B cell (primary cell): ENCODE measurements at regions of chr12 and their contacts with region 1.

Region 1: DNA sequence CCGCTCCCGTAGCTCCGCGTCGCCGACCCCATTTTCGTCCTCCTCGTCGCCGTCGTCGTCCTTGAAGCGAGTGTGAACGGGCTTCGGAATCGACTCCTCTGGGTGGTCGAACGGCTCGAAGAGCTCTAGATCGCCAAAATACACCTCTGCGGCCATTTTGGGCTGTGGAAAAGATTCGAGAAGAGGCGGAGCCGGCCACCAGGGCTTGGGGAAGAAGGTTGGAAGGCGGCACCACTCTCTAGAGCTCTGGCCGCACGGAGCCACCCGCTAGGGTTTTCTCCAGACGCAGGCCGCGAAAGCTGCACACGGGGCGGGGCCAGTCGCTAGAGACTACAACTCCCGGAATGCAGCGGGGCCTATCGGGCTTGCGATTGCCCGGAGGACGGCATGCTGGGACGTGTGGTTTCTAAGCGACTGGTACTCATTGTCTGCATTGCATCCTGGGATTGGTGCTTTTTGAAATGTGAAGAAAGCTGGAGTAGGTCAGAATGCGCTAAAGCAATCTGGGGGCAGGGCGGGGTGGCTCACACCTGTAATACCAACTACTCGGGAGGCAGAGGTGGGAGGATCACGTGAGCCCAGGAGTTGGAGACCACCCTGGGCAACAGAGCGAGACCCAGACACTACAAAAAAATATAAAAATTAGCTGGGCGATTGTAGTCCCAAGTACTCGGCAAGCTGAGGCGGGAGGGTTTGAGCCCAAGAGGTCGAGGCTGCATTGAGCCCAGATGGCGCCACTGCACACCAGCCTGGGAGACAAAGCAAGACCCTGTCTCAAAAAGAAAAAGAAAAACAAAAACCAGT is at the start of gene ZCCHC8:
- DNase-seq: peak; percentile 97
- ATAC-seq: peak; percentile 91
- H3K4me3 ChIP-seq: peak within 1 kb of the TSS; percentile 71 to 93 (median 84)
- H3K4me3 Mint-ChIP-seq: peak within 1 kb of the TSS; percentile 83
- H3K27ac ChIP-seq: peak within 1 kb of the TSS; percentile 79 to 93
- H3K27ac Mint-ChIP-seq: peak within 1 kb of the TSS; percentile 87
- H3K4me1 ChIP-seq: peaks cover 15 to 30% of the 10 kb centered on the region in 2 donors
- H3K4me1 Mint-ChIP-seq: peaks cover 36% of the 10 kb centered on the region
- H3K27me3 ChIP-seq: no peaks in the 10 kb centered on the region
- H3K27me3 Mint-ChIP-seq: no peaks in the 10 kb centered on the region
- CTCF ChIP-seq: no peak
- total RNA-seq, gene ZCCHC8: 56.2 and 57.0 TPM in 2 replicates

Region 2: GRCh38 chr12:121802846-121803630 is 697.8 kb before region 1 on chr12:
- CTCF ChIA-PET with region 1: interaction called, 3 read pairs
- POLR2A ChIA-PET with region 1: no interaction called
- intact Hi-C with region 1: loop called (anchors 10 kb)
- DNase-seq: peak; percentile 98
- ATAC-seq: peak; percentile 51
- H3K4me3 ChIP-seq: peak overlapping the region; percentile 79 to 95 (median 89)
- H3K4me3 Mint-ChIP-seq: peak overlapping the region; percentile 90
- H3K27ac ChIP-seq: peak overlapping the region; percentile 97
- H3K27ac Mint-ChIP-seq: peak overlapping the region; percentile 98
- H3K4me1 ChIP-seq: peaks cover 33 to 53% of the 10 kb centered on the region in 2 donors
- H3K4me1 Mint-ChIP-seq: peaks cover 50% of the 10 kb centered on the region
- H3K27me3 ChIP-seq: no peaks in the 10 kb centered on the region
- H3K27me3 Mint-ChIP-seq: no peaks in the 10 kb centered on the region
- CTCF ChIP-seq: no peak

Region 3: GRCh38 chr12:121823101-121823726 is 677.7 kb before region 1 on chr12:
- CTCF ChIA-PET with region 1: no interaction called
- POLR2A ChIA-PET with region 1: no interaction called
- intact Hi-C with region 1: no loop called
- DNase-seq: no peak
- ATAC-seq: no peak
- H3K4me3 ChIP-seq: no peak overlapping the region
- H3K4me3 Mint-ChIP-seq: no peak overlapping the region
- H3K27ac ChIP-seq: no peak overlapping the region
- H3K27ac Mint-ChIP-seq: no peak overlapping the region
- H3K4me1 ChIP-seq: no peaks in the 10 kb centered on the region
- H3K4me1 Mint-ChIP-seq: no peaks in the 10 kb centered on the region
- H3K27me3 ChIP-seq: no peaks in the 10 kb centered on the region
- H3K27me3 Mint-ChIP-seq: no peaks in the 10 kb centered on the region
- CTCF ChIP-seq: no peak

Region 4: GRCh38 chr12:122265931-122266771 is 234.7 kb before region 1 on chr12 and contains the start of gene VPS33A:
- CTCF ChIA-PET with region 1: no interaction called
- POLR2A ChIA-PET with region 1: interaction called, 4 read pairs
- intact Hi-C with region 1: loop called (anchors 1 kb)
- DNase-seq: peak; percentile 96
- ATAC-seq: peak; percentile 82
- H3K4me3 ChIP-seq: peak within 1 kb of the TSS; percentile 70 to 96 (median 91)
- H3K4me3 Mint-ChIP-seq: peak within 1 kb of the TSS; percentile 99
- H3K27ac ChIP-seq: peak within 1 kb of the TSS; percentile 89 to 97
- H3K27ac Mint-ChIP-seq: peak within 1 kb of the TSS; percentile 100
- H3K4me1 ChIP-seq: peaks cover 9 to 14% of the 10 kb centered on the region in 2 donors
- H3K4me1 Mint-ChIP-seq: peaks cover 23% of the 10 kb centered on the region
- H3K27me3 ChIP-seq: no peaks in the 10 kb centered on the region
- H3K27me3 Mint-ChIP-seq: no peaks in the 10 kb centered on the region
- CTCF ChIP-seq: no peak
- total RNA-seq, gene VPS33A: 34.6 and 34.9 TPM in 2 replicates

Region 5: GRCh38 chr12:122356192-122356635 is 144.7 kb before region 1 on chr12:
- CTCF ChIA-PET with region 1: no interaction called
- POLR2A ChIA-PET with region 1: no interaction called
- intact Hi-C with region 1: no loop called
- DNase-seq: peak; percentile 66
- ATAC-seq: peak; percentile 56
- H3K4me3 ChIP-seq: no peak overlapping the region
- H3K4me3 Mint-ChIP-seq: no peak overlapping the region
- H3K27ac ChIP-seq: no peak overlapping the region
- H3K27ac Mint-ChIP-seq: no peak overlapping the region
- H3K4me1 ChIP-seq: no peaks in the 10 kb centered on the region
- H3K4me1 Mint-ChIP-seq: peaks cover 3% of the 10 kb centered on the region
- H3K27me3 ChIP-seq: no peaks in the 10 kb centered on the region
- H3K27me3 Mint-ChIP-seq: no peaks in the 10 kb centered on the region
- CTCF ChIP-seq: peak; percentile 91

Region 6: DNA sequence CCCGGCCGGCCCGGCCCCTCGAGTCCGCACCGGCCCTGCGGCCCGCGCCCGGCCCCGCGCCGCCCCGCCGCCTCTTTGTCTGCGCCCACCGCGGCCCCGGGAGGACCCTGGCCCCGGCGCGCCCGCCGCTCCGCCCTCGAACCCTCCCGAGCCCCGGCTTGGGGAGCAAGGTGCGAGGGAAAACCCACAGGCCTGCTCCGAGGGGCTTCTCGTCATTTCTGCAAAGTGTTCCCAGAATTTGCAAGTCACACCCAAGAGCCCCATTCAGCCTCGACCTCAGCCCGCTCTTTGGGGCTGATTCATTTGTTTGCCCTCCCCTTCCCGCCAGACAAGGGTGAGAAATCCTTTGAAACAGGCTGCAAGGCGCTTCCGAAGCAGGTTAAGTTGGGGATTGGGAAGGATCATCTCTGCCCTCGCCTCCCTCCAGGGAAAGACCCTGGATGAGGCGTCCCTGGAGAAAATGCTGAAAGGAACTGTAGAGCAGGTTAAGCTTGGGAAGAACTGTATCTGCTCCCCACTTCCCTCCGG is 78.1 kb before region 1 on chr12:
- CTCF ChIA-PET with region 1: no interaction called
- POLR2A ChIA-PET with region 1: no interaction called
- intact Hi-C with region 1: no loop called
- DNase-seq: peak; percentile 52
- ATAC-seq: peak; percentile 2
- H3K4me3 ChIP-seq: peak overlapping the region; percentile 50 to 61 (median 61)
- H3K4me3 Mint-ChIP-seq: peak overlapping the region; percentile 90
- H3K27ac ChIP-seq: peak overlapping the region in 1 of 2 donors; percentile 39
- H3K27ac Mint-ChIP-seq: peak overlapping the region; percentile 85
- H3K4me1 ChIP-seq: peaks cover 26 to 39% of the 10 kb centered on the region in 2 donors
- H3K4me1 Mint-ChIP-seq: peaks cover 39% of the 10 kb centered on the region
- H3K27me3 ChIP-seq: no peaks in the 10 kb centered on the region
- H3K27me3 Mint-ChIP-seq: no peaks in the 10 kb centered on the region
- CTCF ChIP-seq: no peak

Region 7: GRCh38 chr12:122471324-122472226 is 29.3 kb before region 1 on chr12:
- CTCF ChIA-PET with region 1: interaction called, 11 read pairs
- POLR2A ChIA-PET with region 1: no interaction called
- intact Hi-C with region 1: no loop called
- DNase-seq: peak; percentile 71
- ATAC-seq: peak; percentile 63
- H3K4me3 ChIP-seq: no peak overlapping the region
- H3K4me3 Mint-ChIP-seq: no peak overlapping the region
- H3K27ac ChIP-seq: peak overlapping the region in 1 of 2 donors; percentile 15
- H3K27ac Mint-ChIP-seq: no peak overlapping the region
- H3K4me1 ChIP-seq: no peaks in the 10 kb centered on the region
- H3K4me1 Mint-ChIP-seq: peaks cover 4% of the 10 kb centered on the region
- H3K27me3 ChIP-seq: no peaks in the 10 kb centered on the region
- H3K27me3 Mint-ChIP-seq: no peaks in the 10 kb centered on the region
- CTCF ChIP-seq: peak; percentile 91

Region 8: GRCh38 chr12:122974274-122974891 is 473.5 kb after region 1 on chr12:
- CTCF ChIA-PET with region 1: no interaction called
- POLR2A ChIA-PET with region 1: no interaction called
- intact Hi-C with region 1: loop called (anchors 1 kb)
- DNase-seq: peak; percentile 98
- ATAC-seq: peak; percentile 89
- H3K4me3 ChIP-seq: peak overlapping the region; percentile 76 to 97 (median 90)
- H3K4me3 Mint-ChIP-seq: peak overlapping the region; percentile 100
- H3K27ac ChIP-seq: peak overlapping the region; percentile 91 to 99
- H3K27ac Mint-ChIP-seq: peak overlapping the region; percentile 98
- H3K4me1 ChIP-seq: peaks cover 19 to 36% of the 10 kb centered on the region in 2 donors
- H3K4me1 Mint-ChIP-seq: peaks cover 32% of the 10 kb centered on the region
- H3K27me3 ChIP-seq: no peaks in the 10 kb centered on the region
- H3K27me3 Mint-ChIP-seq: no peaks in the 10 kb centered on the region
- CTCF ChIP-seq: no peak